Ascending aorta (tissue), 2 donors: ENCODE measurements at regions of chr1 and their contacts with region 1.

Region 1: DNA sequence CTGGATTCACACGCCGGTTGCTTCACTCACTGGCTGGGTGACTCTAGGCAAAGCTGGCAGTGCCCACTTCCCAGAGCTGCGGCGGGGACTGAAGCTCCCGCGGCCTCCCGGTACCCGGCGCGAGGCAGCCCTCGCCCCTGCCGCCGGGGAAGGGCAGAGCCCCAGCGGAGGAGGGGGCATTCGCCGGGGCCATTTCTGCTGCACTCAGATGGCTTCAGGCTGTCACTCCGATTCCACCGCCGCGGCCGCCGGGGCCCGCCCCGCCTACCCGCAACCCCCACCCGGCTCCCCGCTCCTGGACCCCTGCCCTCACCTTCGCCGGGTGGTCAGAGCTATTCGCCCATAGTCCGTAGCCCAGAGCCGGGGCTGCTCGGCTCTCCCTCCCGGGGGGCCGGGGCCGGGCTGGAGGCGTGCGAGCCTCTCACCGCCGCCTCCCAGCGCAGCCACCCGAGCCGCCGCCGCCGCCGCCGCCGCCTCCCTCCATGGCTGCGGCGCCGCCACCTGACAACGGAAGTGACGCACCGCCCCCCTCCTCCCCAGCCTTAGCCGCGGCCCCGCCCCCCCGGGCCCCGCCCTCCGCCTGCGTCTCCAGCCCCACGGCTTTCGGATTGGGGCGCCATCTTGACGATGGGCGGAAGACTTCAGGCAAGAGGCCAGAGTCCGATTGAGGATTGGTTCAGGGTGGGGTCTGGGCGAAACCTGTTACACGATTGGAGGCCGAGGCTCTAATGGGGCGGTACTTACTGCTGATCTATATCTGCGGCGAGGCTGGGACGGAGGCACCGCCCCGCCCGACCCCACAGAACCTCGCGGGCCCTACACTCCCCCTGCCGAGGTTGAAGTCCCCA is at the start of gene STK40:
- DNase-seq: peak; percentile 95 to 99
- H3K4me3 ChIP-seq: peak within 1 kb of the TSS; percentile 94 to 99
- H3K27ac ChIP-seq: peak within 1 kb of the TSS; percentile 94 to 99
- H3K4me1 ChIP-seq: peaks cover 20 to 52% of the 10 kb centered on the region in 2 donors
- H3K27me3 ChIP-seq: no peaks in the 10 kb centered on the region
- CTCF ChIP-seq: no peak
- total RNA-seq, gene STK40: 77.0 TPM

Region 2: GRCh38 chr1:35930593-35931445 is 454.8 kb before region 1 on chr1 and contains the start of gene AGO3:
- intact Hi-C with region 1: loop called (anchors 2 kb)
- DNase-seq: peak; percentile 21 to 88
- H3K4me3 ChIP-seq: peak within 1 kb of the TSS; percentile 86 to 90
- H3K27ac ChIP-seq: peak within 1 kb of the TSS; percentile 98 to 99
- H3K4me1 ChIP-seq: peaks cover 0 to 13% of the 10 kb centered on the region in 2 donors
- H3K27me3 ChIP-seq: no peaks in the 10 kb centered on the region
- CTCF ChIP-seq: no peak
- total RNA-seq, gene AGO3: 19.7 TPM

Region 3: DNA sequence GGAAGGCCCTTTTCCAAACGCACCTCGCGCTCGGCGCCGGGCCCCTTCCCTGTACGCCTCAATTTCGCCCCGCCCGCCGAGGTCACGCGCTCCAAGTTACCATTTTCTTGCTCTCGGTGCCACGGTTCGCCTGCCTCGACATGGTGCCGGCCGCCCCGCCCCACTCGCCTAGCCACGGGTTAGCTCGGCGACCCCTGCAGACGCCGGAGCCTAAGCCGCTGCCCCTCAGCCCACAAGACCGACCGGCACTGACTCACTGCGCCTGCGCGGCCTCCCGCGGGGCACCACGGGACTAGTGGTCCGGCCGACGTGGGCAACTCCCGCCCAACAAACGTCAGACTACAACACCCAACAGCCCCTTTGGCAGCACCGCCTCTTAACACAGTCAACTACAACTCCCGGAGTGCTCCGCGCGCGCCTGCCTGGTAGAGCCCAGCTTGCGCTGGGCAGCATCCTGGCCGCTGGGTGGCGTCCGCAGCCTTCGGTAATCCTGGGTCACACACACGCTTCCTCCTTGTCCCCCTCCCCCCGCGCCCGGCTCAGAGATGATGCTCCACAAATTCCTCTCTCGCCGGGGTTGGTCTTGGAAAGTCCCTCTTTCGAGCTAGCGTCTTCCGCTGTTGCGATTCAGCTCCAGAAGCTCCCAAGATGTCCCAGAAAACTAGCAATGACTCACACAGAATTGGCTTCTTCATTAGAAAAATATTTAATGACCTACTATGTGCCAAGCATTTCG is 236.2 kb before region 1 on chr1 and contains the start of gene TRAPPC3:
- intact Hi-C with region 1: loop called (anchors 10 kb)
- DNase-seq: peak; percentile 100
- H3K4me3 ChIP-seq: peak within 1 kb of the TSS; percentile 71 to 77
- H3K27ac ChIP-seq: peak within 1 kb of the TSS; percentile 93 to 98
- H3K4me1 ChIP-seq: peaks cover 26 to 36% of the 10 kb centered on the region in 2 donors
- H3K27me3 ChIP-seq: no peaks in the 10 kb centered on the region
- CTCF ChIP-seq: peak; percentile 88 to 98 (median 95)
- total RNA-seq, gene TRAPPC3: 52.0 TPM

Region 4: DNA sequence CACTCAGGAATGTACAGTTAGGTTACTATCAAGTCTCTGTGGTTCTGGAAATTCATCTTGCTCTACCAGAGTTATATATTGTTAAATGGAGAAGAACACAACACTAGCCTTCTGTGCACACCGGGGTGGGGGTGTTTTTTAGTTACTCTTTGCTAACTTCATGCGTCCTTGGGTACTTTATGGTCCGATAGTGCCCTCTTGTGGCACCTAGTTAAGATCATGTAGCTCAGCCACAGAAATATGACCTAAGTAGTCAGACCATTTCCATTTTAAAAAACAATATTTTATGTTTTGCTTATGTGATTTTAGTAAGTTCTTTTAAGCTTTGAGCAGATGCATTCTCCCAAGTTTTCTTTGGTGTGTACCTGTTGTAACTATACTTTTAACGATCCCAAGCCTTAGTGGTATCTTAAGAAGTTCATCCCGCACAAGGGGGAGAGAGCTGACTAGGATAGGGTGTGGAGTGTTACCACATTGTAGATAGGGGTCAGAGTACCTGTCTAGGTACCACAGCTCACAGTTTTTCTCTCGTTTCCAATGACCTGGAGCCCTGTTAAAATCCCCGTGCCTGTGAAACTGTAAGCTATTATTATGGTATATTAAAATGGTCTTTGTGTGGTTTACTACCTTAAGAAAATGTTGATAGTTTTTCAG is 100.1 kb before region 1 on chr1:
- intact Hi-C with region 1: no loop called
- DNase-seq: peak in 1 of 2 donors; percentile 86
- H3K4me3 ChIP-seq: no peak overlapping the region
- H3K27ac ChIP-seq: peak overlapping the region in 1 of 2 donors; percentile 20
- H3K4me1 ChIP-seq: peaks cover 3 to 4% of the 10 kb centered on the region in 2 donors
- H3K27me3 ChIP-seq: no peaks in the 10 kb centered on the region
- CTCF ChIP-seq: peak; percentile 63 to 71 (median 70)

Region 5: GRCh38 chr1:36323597-36324352 is 61.9 kb before region 1 on chr1 and contains the start of gene EVA1B:
- intact Hi-C with region 1: loop called (anchors 5 kb)
- DNase-seq: peak; percentile 55 to 91
- H3K4me3 ChIP-seq: peak within 1 kb of the TSS; percentile 68 to 75
- H3K27ac ChIP-seq: peak within 1 kb of the TSS; percentile 91 to 98
- H3K4me1 ChIP-seq: peaks cover 14 to 29% of the 10 kb centered on the region in 2 donors
- H3K27me3 ChIP-seq: no peaks in the 10 kb centered on the region
- CTCF ChIP-seq: no peak
- total RNA-seq, gene EVA1B: 251 TPM

Region 6: DNA sequence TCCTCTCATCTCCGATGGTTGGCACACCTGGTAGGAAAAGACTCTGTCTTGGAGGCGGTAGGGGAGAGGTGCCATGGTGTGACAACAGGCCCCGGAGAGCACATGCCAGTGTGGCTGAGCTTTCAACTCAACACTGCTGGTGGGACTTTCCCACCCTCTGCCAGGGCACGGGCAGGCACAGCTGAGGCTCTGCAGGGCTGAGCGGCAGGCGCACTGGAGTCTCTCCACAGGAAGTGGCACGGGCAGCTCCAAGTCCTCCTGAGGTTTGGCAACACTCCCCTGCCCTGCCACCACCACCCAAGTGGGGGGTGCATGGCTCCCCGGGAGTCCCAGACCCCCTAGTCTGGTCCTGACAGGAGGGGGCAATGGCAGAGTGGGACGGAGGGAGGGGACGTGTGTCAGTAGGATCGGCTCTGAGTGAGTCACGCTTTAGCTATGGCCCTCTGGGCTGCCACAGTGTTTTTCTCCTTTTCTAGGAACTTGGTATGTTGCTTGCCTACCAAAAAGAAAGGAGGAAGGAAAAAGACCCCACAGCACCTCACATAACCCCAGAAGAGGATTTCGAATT is 34.9 kb before region 1 on chr1:
- intact Hi-C with region 1: loop called (anchors 1 kb)
- DNase-seq: peak in 1 of 2 donors; percentile 86
- H3K4me3 ChIP-seq: peak overlapping the region in 1 of 2 donors; percentile 30
- H3K27ac ChIP-seq: peak overlapping the region; percentile 84 to 89
- H3K4me1 ChIP-seq: peaks cover 39 to 43% of the 10 kb centered on the region in 2 donors
- H3K27me3 ChIP-seq: no peaks in the 10 kb centered on the region
- CTCF ChIP-seq: no peak

Region 7: DNA sequence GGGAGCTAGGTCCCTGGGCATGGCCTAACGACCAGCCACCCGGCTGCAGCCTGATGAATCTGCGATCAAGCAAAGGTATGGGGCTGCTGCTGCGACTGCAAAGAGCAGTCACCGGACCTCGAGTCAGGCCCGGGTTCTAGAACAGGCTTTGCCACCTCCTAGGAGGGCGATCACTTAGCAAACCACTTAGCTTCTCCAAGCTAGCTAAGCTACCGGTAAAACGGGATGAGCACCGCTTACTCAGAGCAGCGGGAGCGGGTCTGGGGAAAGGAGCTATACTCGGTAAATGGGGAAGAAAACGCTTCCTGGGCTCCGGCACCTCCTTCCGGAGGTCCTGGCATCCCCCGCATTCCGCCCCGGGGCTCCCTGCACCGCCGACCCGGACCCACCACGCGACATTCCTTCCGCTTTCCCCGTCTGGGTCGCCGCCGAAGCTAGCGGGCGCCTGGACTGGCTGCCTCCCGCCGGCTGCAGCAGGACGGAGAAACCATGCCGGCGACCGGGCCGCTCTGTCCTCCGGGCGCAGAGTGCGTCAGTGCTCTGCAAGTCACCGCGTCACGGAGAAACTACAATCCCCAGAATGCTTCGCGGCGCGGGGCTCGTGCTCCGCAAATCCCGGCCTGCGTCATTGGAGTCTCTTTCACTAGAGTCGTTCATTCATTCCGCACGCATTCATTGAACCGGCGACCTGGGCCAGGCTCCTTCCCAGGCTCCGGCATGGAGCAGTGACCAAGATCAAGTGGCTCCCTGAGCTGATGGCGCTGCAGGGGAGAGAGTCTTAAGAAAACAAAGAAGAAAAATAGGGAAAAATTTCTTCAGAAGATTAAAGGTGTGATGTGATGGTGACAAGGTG is 12.0 kb after region 1 on chr1 and contains the start of gene LSM10:
- intact Hi-C with region 1: loop called (anchors 1 kb)
- DNase-seq: peak; percentile 74 to 97
- H3K4me3 ChIP-seq: peak within 1 kb of the TSS; percentile 75 to 80
- H3K27ac ChIP-seq: peak within 1 kb of the TSS; percentile 85 to 95
- H3K4me1 ChIP-seq: peaks cover 0 to 8% of the 10 kb centered on the region in 2 donors
- H3K27me3 ChIP-seq: no peaks in the 10 kb centered on the region
- CTCF ChIP-seq: no peak
- total RNA-seq, gene LSM10: 9.8 TPM